ENCODE measurements at regions of chr4 and their contacts with region 1.

Region 1: GRCh38 chr4:156169011-156169410 is 215.3 kb upstream of the CTSO start:
- DNase-seq: peak; percentile 75
- ATAC-seq: peak; percentile 91
- H3K4me3 ChIP-seq: no peak overlapping the region
- H3K27ac ChIP-seq: peak overlapping the region; percentile 30; the same call in 1 of the 2 replicates
- H3K4me1 ChIP-seq: peaks cover 8% of the 10 kb centered on the region; the same call in 1 of the 2 replicates
- H3K27me3 ChIP-seq: no peaks in the 10 kb centered on the region
- CTCF ChIP-seq: peak; percentile 71

Region 2: DNA sequence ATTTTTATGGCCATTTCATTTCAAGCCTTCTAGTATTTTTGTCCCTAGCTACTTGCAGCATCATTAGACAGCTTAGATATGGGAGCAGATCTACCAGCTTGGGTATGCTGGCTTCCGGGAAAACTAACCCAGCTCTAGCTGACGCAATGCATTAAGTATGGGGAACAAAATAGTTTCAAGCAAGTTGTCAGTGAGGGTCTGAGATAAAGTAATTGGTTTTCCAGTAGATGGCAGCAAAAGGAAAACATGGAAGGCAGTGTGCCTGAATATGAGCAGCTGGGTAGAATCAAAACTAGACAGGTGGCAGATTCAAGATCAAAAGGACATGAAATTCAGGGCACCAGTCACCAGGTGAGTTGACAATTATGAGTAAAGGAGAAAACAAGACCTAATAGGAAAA is 125.6 kb after region 1 on chr4:
- CTCF ChIA-PET with region 1: no interaction called
- POLR2A ChIA-PET with region 1: no interaction called
- intact Hi-C with region 1: loop called (anchors 5 kb)
- DNase-seq: peak; percentile 70
- ATAC-seq: peak; percentile 50; the same call in 1 of the 2 replicates
- H3K4me3 ChIP-seq: no peak overlapping the region
- H3K27ac ChIP-seq: peak overlapping the region; percentile 26; the same call in 1 of the 2 replicates
- H3K4me1 ChIP-seq: peaks cover 29% of the 10 kb centered on the region
- H3K27me3 ChIP-seq: no peaks in the 10 kb centered on the region
- CTCF ChIP-seq: peak; percentile 55

Region 3: GRCh38 chr4:157045507-157046127 is 876.6 kb after region 1 on chr4:
- CTCF ChIA-PET with region 1: interaction called, 3 read pairs
- POLR2A ChIA-PET with region 1: no interaction called
- intact Hi-C with region 1: loop called (anchors 1 kb)
- DNase-seq: peak; percentile 67
- ATAC-seq: peak; percentile 85
- H3K4me3 ChIP-seq: no peak overlapping the region
- H3K27ac ChIP-seq: no peak overlapping the region
- H3K4me1 ChIP-seq: no peaks in the 10 kb centered on the region
- H3K27me3 ChIP-seq: no peaks in the 10 kb centered on the region
- CTCF ChIP-seq: peak; percentile 82